ENCODE measurements at regions of chr5 and their contacts with region 1.

Region 1: DNA sequence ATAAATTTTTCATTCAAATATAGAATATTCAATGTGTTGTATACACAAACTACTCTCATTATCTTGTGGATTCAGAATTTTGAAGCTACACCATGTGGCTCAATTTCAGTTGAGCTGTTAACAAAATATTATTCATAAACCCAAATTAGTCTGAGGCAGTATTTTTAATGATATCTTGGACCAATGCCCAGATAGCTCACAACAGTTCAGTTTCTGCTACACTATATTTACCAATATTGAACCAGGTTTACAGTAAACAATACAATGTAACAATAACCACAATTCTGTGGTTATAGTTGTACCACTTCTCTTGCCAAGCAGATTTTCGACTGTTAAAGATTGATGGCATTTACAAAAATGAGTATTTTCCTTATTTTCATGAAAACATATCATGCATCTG is 99.9 kb downstream of the SSBP2 start:
- DNase-seq: no peak
- ATAC-seq: peak; percentile 37; the same call in 2 of the 3 replicates
- H3K4me3 ChIP-seq: no peak overlapping the region
- H3K27ac ChIP-seq: no peak overlapping the region
- H3K4me1 ChIP-seq: no peaks in the 10 kb centered on the region
- H3K27me3 ChIP-seq: no peaks in the 10 kb centered on the region
- CTCF ChIP-seq: no peak
- EP300 ChIP-seq: no peak
- POLR2A ChIP-seq: no peak
- RAD21 ChIP-seq: no peak

Region 2: DNA sequence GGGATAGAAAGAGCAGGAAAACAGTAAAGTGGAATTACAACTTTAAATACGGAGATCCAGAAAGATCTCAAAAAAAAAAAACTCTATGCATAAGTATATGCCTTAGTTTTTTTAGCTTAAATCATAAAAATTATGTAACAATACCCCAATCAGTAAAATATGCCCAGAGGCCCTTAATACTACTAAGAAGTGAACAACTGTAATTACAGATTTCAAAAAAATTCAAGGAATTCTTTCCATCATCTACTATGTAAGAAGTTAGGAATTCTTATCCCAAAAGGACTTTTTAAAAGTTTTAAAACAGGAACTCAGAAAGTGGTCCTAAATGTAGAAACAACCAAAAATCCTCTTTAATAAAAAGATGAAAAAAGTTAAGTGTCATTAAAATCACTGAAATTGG is 11.4 kb before region 1 on chr5:
- CTCF ChIA-PET with region 1: interaction called, 3 read pairs
- POLR2A ChIA-PET with region 1: no interaction called
- RAD21 ChIA-PET with region 1: no interaction called
- SMC1A ChIA-PET with region 1: interaction called, 11 read pairs
- in situ Hi-C with region 1: no loop called
- intact Hi-C with region 1: no loop called
- DNase-seq: no peak
- ATAC-seq: no peak
- H3K4me3 ChIP-seq: no peak overlapping the region
- H3K27ac ChIP-seq: no peak overlapping the region
- H3K4me1 ChIP-seq: no peaks in the 10 kb centered on the region
- H3K27me3 ChIP-seq: no peaks in the 10 kb centered on the region
- CTCF ChIP-seq: no peak
- EP300 ChIP-seq: no peak
- POLR2A ChIP-seq: no peak
- RAD21 ChIP-seq: no peak

Measured in GM12878 (cell line).